ENCODE measurements at regions of chr12 and their contacts with region 1.

Region 1: DNA sequence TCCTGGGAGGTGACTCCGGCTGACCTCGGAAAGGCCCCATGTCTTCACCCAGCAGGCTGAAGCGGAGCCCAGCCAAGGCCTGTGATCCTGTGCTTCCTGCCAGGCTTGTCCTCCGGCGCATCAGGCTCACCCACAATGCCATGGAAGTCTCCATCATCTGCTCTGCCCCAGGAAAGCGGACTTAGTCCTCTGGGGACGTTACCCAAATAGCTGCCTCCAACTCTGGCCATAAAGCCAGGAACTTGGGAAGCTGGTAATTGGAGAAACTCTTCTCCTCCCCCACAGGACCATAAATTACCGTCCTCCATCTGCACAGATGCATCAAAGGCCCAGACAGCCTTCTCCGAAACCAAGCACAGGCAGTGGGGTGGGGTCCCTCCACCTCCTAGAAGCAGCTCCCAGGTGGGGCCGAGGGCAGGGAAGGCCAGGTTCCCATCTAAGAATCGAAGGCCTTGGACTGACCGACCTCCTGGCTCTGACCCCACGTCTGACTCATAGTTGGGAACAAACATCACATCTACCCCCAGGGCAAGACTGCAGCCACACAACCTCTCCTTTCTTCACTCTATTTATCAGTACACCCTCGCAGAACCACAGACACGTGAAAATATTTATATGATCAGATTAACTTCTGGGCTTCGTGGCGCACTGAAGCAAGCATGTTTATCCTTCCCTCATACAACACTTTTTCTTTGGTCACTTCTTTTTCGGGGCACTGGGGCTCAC is 56.4 kb downstream of the PITPNM2 start:
- DNase-seq: peak; percentile 59 to 73
- ATAC-seq: peak; percentile 52 to 57
- H3K4me3 ChIP-seq: no peak overlapping the region
- H3K27ac ChIP-seq: peak overlapping the region; percentile 76 to 90 (median 88)
- H3K4me1 ChIP-seq: peaks cover 63 to 66% of the 10 kb centered on the region in 2 donors
- H3K27me3 ChIP-seq: no peaks in the 10 kb centered on the region
- CTCF ChIP-seq: no peak
- POLR2A ChIP-seq: no peak

Region 2: GRCh38 chr12:123050331-123050831 is 44.1 kb before region 1 on chr12:
- in situ Hi-C with region 1: no loop called
- intact Hi-C with region 1: loop called (anchors 1 kb)
- DNase-seq: peak; percentile 77 to 92
- ATAC-seq: peak; percentile 88 to 94
- H3K4me3 ChIP-seq: no peak overlapping the region
- H3K27ac ChIP-seq: peak overlapping the region; percentile 84 to 94 (median 90)
- H3K4me1 ChIP-seq: peaks cover 35% of the 10 kb centered on the region in 2 donors
- H3K27me3 ChIP-seq: no peaks in the 10 kb centered on the region
- CTCF ChIP-seq: no peak
- POLR2A ChIP-seq: no peak

Region 3: GRCh38 chr12:123064885-123065619 is 29.5 kb before region 1 on chr12:
- in situ Hi-C with region 1: no loop called
- intact Hi-C with region 1: loop called (anchors 1 kb)
- DNase-seq: peak; percentile 55 to 83
- ATAC-seq: peak; percentile 11 to 43
- H3K4me3 ChIP-seq: no peak overlapping the region
- H3K27ac ChIP-seq: peak overlapping the region; percentile 85 to 98 (median 94)
- H3K4me1 ChIP-seq: peaks cover 78 to 80% of the 10 kb centered on the region in 2 donors
- H3K27me3 ChIP-seq: no peaks in the 10 kb centered on the region
- CTCF ChIP-seq: peak in 3 of 5 experiments; percentile 17 to 46 (median 22)
- POLR2A ChIP-seq: no peak

Region 4: DNA sequence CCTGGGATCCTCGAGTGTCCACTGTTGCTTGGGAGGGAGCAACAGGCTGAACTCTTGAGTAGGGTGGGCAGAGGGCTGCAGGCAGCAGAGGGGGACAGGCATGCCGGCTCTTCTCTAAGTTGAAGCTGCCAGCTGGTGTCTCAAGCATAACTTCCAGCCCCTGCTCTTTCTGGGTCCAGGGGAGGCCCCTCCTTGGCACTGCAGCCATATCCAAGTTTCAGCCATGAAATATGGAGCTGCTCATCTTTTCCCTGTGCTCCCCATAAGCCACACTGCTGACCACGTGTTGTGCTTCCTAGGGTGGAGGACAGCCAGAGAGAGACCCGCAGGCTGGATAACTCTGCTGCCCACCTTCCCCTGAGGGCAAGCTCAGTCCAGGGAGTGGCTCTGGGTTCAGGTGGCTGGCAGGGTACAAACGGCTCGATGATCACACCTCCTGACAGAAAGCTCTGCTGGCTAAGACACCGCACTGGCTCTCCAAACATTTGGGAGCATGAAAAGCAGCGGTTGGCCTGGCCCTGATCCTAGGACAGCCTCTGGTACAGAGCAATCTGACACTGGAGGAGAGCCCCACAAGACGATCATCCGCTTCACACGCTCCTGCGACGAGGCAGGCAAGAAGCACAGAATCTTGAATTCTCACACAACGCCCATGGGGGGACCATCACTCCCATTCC is 23.3 kb before region 1 on chr12:
- in situ Hi-C with region 1: no loop called
- intact Hi-C with region 1: loop called (anchors 1 kb)
- DNase-seq: peak; percentile 80 to 90
- ATAC-seq: peak; percentile 86 to 90
- H3K4me3 ChIP-seq: peak overlapping the region in 1 of 4 donors; percentile 2
- H3K27ac ChIP-seq: peak overlapping the region in 3 of 4 donors; percentile 41 to 71 (median 66)
- H3K4me1 ChIP-seq: peaks cover 54 to 56% of the 10 kb centered on the region in 2 donors
- H3K27me3 ChIP-seq: no peaks in the 10 kb centered on the region
- CTCF ChIP-seq: peak in 1 of 5 experiments; percentile 14
- POLR2A ChIP-seq: peak; percentile 63 to 67

Region 5: GRCh38 chr12:123286652-123287373 is 192.3 kb after region 1 on chr12:
- in situ Hi-C with region 1: no loop called
- intact Hi-C with region 1: no loop called
- DNase-seq: no peak
- ATAC-seq: no peak
- H3K4me3 ChIP-seq: no peak overlapping the region
- H3K27ac ChIP-seq: no peak overlapping the region
- H3K4me1 ChIP-seq: no peaks in the 10 kb centered on the region
- H3K27me3 ChIP-seq: no peaks in the 10 kb centered on the region
- CTCF ChIP-seq: no peak
- POLR2A ChIP-seq: no peak